Heart right ventricle (tissue), 16 donors: ENCODE measurements at regions of chr21 and their contacts with region 1.

Region 1: DNA sequence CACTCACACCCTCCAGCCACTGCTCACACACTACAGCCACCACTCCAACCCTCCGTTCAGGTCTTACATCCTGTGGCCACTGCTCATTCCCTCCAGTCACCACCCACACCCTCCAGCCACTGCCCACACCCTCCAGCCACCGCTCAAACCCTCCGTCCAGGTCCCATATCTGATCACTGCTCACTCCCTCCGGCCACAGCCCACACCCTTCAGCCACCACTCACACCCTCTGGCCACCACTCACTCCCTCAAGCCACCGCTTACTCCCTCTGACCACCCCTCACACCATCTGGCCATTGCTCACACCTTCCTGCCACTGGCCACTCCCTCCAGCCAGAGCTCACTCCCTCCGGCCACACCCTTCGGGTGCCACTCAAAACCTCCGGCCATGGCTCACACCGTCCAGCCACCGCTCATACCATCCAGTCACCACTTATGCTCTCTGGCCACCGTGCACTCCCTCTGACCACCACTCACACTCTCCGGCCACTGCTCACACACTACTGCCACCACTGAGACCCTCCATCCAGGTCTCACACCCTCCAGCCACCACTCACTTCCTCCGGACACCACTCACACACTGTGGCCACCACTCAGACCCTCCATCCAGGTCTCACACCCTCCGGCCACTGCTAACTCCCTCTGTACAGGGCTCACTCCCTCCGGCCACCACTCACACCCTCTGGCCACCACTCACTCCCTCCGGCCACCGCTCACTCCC is 4.8 kb upstream of the TFF1 start:
- DNase-seq: no peak
- ATAC-seq: peak in 1 of 8 donors; percentile 20
- H3K4me3 ChIP-seq: no peak overlapping the region
- H3K27ac ChIP-seq: no peak overlapping the region
- H3K4me1 ChIP-seq: no peaks in the 10 kb centered on the region
- H3K27me3 ChIP-seq: peaks cover 0 to 77% (median 40%) of the 10 kb centered on the region in 7 donors
- CTCF ChIP-seq: no peak

Region 2: GRCh38 chr21:42358937-42359336 is 12.2 kb before region 1 on chr21:
- intact Hi-C with region 1: loop called in 1 of 10 experiments (anchors 1 kb)
- DNase-seq: no peak
- ATAC-seq: no peak
- H3K4me3 ChIP-seq: no peak overlapping the region
- H3K27ac ChIP-seq: no peak overlapping the region
- H3K4me1 ChIP-seq: no peaks in the 10 kb centered on the region
- H3K27me3 ChIP-seq: peaks cover 0 to 26% (median 13%) of the 10 kb centered on the region in 7 donors
- CTCF ChIP-seq: no peak